Posterior cingulate gyrus (tissue), 11 donors: ENCODE measurements at regions of chr10 and their contacts with region 1.

Region 1: GRCh38 chr10:23158370-23158769 is 33.7 kb upstream of the PTF1A start:
- DNase-seq: peak in 6 of 10 donors; percentile 48 to 87 (median 58)

Region 2: GRCh38 chr10:23293145-23293724 is 134.9 kb after region 1 on chr10:
- intact Hi-C with region 1: loop called (anchors 1 kb)
- DNase-seq: peak in 2 of 10 donors; percentile 28 to 49

Region 3: GRCh38 chr10:23525406-23525805 is 367.0 kb after region 1 on chr10:
- intact Hi-C with region 1: loop called (anchors 5 kb)
- DNase-seq: peak in 2 of 10 donors; percentile 8 to 52